ENCODE measurements at regions of chr3 and their contacts with region 1.

Region 1: DNA sequence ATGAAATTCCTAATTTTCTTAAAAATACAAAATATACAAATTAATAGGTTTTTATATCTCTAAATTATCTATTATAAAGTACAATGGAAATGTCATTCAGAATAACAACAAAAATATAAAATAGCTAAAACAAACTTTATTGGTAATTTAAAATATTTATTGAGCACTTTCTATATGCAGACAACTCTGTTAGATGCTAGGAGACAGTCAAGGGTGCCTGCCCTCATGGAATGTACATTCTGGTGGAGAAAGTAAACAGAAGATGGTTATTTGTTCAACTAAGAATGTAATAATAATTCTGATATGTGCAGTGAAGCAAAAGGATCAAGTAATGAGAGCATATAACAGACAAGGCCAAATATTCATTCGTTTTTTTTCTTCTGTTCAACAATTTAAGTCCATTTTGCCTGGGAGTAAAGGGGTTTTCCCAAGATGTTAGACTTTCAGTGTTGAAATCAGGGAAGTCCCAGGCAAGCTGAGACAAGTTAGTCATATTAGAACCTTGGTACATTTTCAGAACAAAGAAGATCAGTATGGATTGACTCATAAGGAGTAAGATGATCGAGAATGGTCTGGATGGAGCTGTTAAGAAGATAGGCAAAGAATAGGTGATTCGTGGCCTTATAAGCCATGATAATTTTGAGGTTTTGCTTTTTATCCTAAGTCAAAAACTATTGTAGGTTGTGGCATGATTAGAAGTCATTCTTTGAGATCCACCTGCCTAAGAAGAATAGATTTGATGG is 150.2 kb upstream of the MLF1 start:
- DNase-seq: no peak
- H3K4me3 Mint-ChIP-seq: no peak overlapping the region
- H3K27ac Mint-ChIP-seq: peak overlapping the region; percentile 6
- H3K4me1 Mint-ChIP-seq: peaks cover 8% of the 10 kb centered on the region
- H3K27me3 Mint-ChIP-seq: no peaks in the 10 kb centered on the region

Region 2: GRCh38 chr3:158384019-158384418 is 36.8 kb before region 1 on chr3:
- CTCF ChIA-PET with region 1: no interaction called
- intact Hi-C with region 1: loop called (anchors 1 kb)
- DNase-seq: no peak
- H3K4me3 Mint-ChIP-seq: no peak overlapping the region
- H3K27ac Mint-ChIP-seq: no peak overlapping the region
- H3K4me1 Mint-ChIP-seq: peaks cover 1% of the 10 kb centered on the region
- H3K27me3 Mint-ChIP-seq: no peaks in the 10 kb centered on the region

Region 3: DNA sequence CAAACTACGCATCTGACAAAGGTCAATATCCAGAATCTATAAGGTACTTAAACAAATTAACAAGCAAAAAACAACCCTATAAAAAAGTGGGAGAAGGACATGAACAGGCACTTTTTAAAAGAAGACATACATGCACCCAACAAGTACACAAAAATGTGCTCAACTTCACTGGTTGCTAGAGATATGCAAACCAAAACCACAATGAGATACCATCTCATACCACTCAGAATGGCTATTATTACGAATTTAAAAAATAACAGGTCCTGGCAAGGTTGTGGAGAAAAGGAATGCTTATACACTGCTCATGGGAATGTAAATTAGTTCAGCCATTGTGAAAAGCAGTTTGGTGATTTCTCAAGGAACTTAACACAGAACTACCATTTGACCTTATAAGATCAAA is 25.4 kb before region 1 on chr3:
- CTCF ChIA-PET with region 1: no interaction called
- intact Hi-C with region 1: no loop called
- DNase-seq: no peak
- H3K4me3 Mint-ChIP-seq: no peak overlapping the region
- H3K27ac Mint-ChIP-seq: no peak overlapping the region
- H3K4me1 Mint-ChIP-seq: no peaks in the 10 kb centered on the region
- H3K27me3 Mint-ChIP-seq: no peaks in the 10 kb centered on the region

Region 4: DNA sequence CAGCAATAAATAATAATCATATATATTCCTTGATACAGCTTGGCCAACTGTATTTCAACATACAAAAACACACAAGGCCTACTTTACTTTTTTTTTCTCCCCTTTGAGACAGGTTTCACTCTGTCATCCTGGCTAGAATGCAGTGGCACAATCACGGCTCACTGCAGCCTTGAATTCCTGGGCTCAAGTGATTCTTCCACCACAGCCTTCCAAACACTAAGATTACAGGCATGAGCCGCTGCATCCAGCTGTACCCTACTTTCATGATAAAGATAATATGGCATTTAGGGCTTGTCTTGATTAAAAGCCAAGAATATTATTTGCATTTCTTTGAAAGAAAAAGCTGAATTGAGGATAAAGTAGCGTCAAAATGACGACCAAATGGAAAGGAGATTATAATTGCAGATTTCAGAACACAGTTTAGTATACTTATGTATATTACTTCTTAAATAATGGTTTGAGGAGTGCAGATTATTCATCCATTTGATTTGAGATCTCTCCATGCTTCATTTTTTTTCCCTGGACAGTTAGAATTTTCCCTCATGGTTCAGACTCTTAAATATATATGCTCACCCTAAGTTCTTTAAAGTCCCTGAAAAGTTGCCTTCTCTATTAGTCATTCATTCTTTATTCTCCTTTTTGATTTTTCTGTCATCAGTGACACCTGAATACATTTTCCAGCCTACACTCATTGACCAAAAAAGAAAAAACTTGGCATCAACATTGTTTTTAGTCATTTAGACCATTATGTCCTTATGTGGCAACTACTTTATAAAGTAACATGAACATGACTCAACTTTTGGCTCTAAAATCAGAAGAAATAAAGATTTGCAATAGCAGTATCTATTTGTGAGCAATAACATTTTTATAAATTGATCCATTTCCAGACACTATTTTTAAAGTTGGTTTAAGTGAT is 101.7 kb after region 1 on chr3:
- CTCF ChIA-PET with region 1: no interaction called
- intact Hi-C with region 1: no loop called
- DNase-seq: no peak
- H3K4me3 Mint-ChIP-seq: no peak overlapping the region
- H3K27ac Mint-ChIP-seq: no peak overlapping the region
- H3K4me1 Mint-ChIP-seq: no peaks in the 10 kb centered on the region
- H3K27me3 Mint-ChIP-seq: no peaks in the 10 kb centered on the region

Measured in activated naive CD4-positive, alpha-beta T cell treated with anti-CD3 and anti-CD28 coated beads for 36 hours (primary cell).